Natural killer cell (primary cell): ENCODE measurements at regions of chr4 and their contacts with region 1.

Region 1: DNA sequence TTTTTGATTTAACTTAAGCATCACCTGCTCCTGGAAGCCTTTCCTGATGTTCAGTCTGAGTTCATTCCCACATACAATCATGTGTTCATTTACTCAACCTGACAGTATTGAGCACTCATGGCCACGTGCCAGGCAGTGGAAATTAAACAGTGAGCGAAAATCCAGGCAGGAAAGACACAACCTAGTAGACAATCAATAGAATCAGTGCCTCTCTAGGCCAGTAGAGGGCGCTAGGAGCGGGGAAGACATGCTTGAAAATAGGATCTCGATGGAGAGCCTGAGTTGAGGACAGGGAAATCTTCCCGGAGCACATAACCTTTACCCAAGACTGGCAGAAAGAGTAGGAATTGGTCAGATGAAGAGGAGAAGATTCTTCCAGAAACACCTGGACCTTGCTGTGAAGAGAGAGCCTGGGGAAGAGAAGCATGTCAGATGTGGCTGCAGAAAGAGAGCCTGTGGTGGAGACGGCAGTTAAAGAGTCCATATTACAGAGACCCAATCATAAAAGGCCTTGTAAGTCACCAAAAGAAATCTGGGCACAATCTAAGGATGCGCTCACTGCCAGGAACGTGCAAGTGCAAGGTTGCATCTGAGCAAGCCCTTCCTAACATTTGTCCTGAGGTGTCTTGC is 103.5 kb downstream of the LDB2 start:
- DNase-seq: peak; percentile 37 to 56
- ATAC-seq: peak; percentile 44 to 72 (median 54)
- H3K4me3 ChIP-seq: no peak overlapping the region
- H3K4me3 Mint-ChIP-seq: no peak overlapping the region
- H3K27ac ChIP-seq: no peak overlapping the region
- H3K27ac Mint-ChIP-seq: peak overlapping the region in 1 of 2 donors; percentile 8
- H3K4me1 ChIP-seq: peaks cover 4% of the 10 kb centered on the region
- H3K4me1 Mint-ChIP-seq: peaks cover 6 to 7% of the 10 kb centered on the region in 2 donors
- H3K27me3 ChIP-seq: no peaks in the 10 kb centered on the region
- H3K27me3 Mint-ChIP-seq: peaks cover 0 to 3% of the 10 kb centered on the region in 2 donors
- CTCF ChIP-seq: peak; percentile 94

Region 2: DNA sequence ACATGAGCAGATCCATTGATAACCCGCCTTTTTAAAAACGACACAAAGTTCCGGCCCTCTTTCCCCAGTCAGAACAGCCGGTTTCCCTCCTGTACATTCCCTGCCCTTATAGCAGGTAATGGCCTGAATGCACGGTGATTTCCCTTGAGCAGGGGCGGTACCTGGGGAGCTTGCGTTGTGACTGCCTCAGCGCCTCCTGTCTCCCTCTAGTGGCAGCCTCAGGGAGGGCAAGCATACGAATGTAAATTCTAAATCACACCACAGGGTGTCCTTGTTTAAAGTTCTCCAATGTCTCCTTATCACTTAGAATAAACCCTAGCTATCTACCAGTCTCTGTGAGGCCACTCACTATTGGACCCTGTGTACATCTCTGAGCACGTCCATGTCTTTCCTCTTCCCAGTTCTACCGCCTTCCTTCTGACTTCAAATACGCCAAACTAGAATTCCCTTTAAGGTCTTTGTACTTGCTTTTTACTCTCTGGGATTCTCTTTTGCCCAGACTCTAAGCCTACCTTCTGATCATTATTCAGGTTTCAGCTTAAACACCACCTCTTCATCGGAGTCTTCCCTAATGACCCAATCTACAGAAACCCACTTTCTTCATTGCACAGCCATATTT is 121.9 kb after region 1 on chr4:
- intact Hi-C with region 1: loop called (anchors 1 kb)
- DNase-seq: peak; percentile 74 to 82
- ATAC-seq: peak; percentile 93 to 100 (median 100)
- H3K4me3 ChIP-seq: no peak overlapping the region
- H3K4me3 Mint-ChIP-seq: no peak overlapping the region
- H3K27ac ChIP-seq: no peak overlapping the region
- H3K27ac Mint-ChIP-seq: no peak overlapping the region
- H3K4me1 ChIP-seq: no peaks in the 10 kb centered on the region
- H3K4me1 Mint-ChIP-seq: peaks cover 9 to 10% of the 10 kb centered on the region in 2 donors
- H3K27me3 ChIP-seq: no peaks in the 10 kb centered on the region
- H3K27me3 Mint-ChIP-seq: peaks cover 0 to 2% of the 10 kb centered on the region in 2 donors
- CTCF ChIP-seq: peak; percentile 94

Region 3: GRCh38 chr4:17324386-17324830 is 529.5 kb after region 1 on chr4:
- intact Hi-C with region 1: loop called (anchors 5 kb)
- DNase-seq: peak in 1 of 2 donors; percentile 72
- ATAC-seq: no peak
- H3K4me3 ChIP-seq: no peak overlapping the region
- H3K4me3 Mint-ChIP-seq: no peak overlapping the region
- H3K27ac ChIP-seq: no peak overlapping the region
- H3K27ac Mint-ChIP-seq: no peak overlapping the region
- H3K4me1 ChIP-seq: no peaks in the 10 kb centered on the region
- H3K4me1 Mint-ChIP-seq: peaks cover 5 to 7% of the 10 kb centered on the region in 2 donors
- H3K27me3 ChIP-seq: no peaks in the 10 kb centered on the region
- H3K27me3 Mint-ChIP-seq: peaks cover 12 to 20% of the 10 kb centered on the region in 2 donors
- CTCF ChIP-seq: peak; percentile 20

Region 4: DNA sequence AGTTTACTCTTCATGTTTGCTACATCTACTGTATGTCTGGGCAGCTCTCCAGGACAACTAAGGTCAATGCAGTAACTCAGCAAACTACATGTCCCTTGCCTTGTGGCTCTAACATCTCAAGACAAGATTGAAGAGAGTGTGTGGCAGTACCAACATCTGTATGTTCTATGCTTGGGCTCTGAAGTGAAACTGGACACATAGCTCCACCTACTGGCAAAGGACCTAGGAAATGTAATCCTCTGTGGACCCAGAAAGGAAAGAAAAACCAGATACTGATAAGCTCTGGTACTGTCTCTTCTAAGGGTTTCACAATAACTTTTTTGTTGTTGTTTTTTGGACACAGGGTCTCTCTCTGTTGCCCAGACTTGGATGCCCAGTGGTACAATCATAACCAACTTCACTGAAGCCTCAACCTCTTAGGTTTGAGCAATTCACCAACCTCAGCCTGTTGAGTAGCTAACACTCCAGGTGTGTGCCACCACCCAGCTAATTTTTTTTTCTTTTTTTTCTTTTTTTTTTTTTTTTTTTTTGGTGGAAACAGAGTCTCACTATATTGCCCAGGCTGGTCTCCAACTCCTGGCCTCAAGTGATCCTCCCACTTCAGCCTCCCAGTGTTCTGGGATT is 652.9 kb after region 1 on chr4:
- intact Hi-C with region 1: loop called (anchors 1 kb)
- DNase-seq: peak in 1 of 2 donors; percentile 80
- ATAC-seq: peak; percentile 66 to 92 (median 82)
- H3K4me3 ChIP-seq: no peak overlapping the region
- H3K4me3 Mint-ChIP-seq: no peak overlapping the region
- H3K27ac ChIP-seq: no peak overlapping the region
- H3K27ac Mint-ChIP-seq: no peak overlapping the region
- H3K4me1 ChIP-seq: no peaks in the 10 kb centered on the region
- H3K4me1 Mint-ChIP-seq: peaks cover 4% of the 10 kb centered on the region in 2 donors
- H3K27me3 ChIP-seq: no peaks in the 10 kb centered on the region
- H3K27me3 Mint-ChIP-seq: peaks cover 10 to 12% of the 10 kb centered on the region in 2 donors
- CTCF ChIP-seq: peak; percentile 57